Posterior vena cava (tissue), 2 donors: ENCODE measurements at regions of chr11 and their contacts with region 1.

Region 1: DNA sequence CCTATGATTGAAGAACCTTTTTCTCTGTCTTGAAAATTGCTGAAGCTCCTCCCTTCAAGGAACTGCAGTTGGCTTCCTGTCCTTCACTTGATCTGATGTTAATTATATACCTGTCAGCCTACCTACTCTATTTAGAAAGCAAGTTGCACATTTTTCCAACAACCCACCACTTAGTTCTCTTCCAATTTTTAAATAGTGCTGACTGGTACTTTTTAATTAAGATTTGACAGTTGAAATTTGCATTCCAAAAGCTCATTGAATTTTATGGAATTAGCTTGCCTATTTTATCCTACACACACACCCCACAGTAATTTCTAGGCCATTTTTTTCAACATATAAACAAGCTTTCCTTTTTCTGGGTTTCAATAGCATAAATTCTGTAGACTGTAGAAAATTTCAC is 820.3 kb upstream of the FAT3 start:
- DNase-seq: no peak

Region 2: GRCh38 chr11:91382946-91383345 is 21.4 kb before region 1 on chr11:
- intact Hi-C with region 1: loop called in 1 of 2 experiments (anchors 1 kb)
- DNase-seq: no peak

Region 3: GRCh38 chr11:91446267-91446666 is 41.9 kb after region 1 on chr11:
- intact Hi-C with region 1: no loop called
- DNase-seq: peak; percentile 51